GM10248 (cell line): ENCODE measurements at regions of chr17 and their contacts with region 1.

Region 1: GRCh38 chr17:3913531-3914311 is 2.5 kb downstream of the P2RX1 start:
- DNase-seq: peak; percentile 89
- CTCF ChIP-seq: peak; percentile 99

Region 2: DNA sequence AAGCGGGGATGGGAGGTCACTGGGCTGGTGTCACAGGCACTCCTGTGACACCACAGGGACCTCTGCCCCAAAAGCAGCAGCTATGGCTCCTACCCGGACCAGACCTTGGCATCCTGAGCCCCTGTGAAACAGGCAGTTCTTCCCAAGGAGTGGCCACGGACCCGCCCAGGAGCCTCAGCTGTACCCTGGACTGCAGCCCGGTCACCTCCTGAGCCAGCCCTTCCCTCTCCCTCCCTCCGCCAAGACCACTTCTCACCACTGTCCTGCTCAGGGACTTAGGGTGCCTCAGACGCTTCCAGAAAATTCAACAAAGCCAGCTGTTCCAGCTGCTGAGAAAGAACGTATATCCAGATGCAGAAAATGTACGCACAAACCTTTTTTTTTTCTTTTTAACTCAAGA is 53.8 kb before region 1 on chr17:
- CTCF ChIA-PET with region 1: interaction called, 17 read pairs
- POLR2A ChIA-PET with region 1: no interaction called
- DNase-seq: no peak
- CTCF ChIP-seq: no peak

Region 3: GRCh38 chr17:3893003-3893719 is 20.6 kb before region 1 on chr17 and contains the start of gene CAMKK1:
- CTCF ChIA-PET with region 1: interaction called, 31 read pairs
- POLR2A ChIA-PET with region 1: interaction called, 3 read pairs
- DNase-seq: peak; percentile 99
- CTCF ChIP-seq: no peak

Region 4: GRCh38 chr17:3965118-3965803 is 51.5 kb after region 1 on chr17:
- CTCF ChIA-PET with region 1: interaction called, 22 read pairs
- POLR2A ChIA-PET with region 1: no interaction called
- DNase-seq: peak; percentile 86
- CTCF ChIP-seq: peak; percentile 26

Region 5: DNA sequence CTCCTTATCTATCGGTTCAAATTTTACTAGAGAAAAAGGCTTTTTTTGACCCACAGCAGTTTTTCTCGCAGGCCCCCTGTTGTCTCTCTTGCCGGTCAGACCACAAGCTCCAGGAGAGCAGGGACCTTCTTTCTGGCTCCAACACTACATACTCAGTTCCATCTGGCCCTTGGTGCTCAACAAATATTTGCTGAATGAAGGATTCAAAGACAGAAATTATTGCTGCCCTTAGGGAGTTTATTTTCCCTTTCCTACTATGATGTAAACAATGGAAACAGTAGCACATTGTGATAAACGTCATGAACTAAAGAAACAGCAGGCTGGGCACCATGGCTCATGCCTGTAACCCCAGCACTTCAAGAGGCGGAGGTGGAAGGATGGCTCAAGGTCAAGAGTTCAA is 109.5 kb after region 1 on chr17:
- CTCF ChIA-PET with region 1: interaction called, 10 read pairs
- POLR2A ChIA-PET with region 1: no interaction called
- DNase-seq: no peak
- CTCF ChIP-seq: no peak